Activated T-helper 1 cell treated with anti-CD3 and anti-CD28 coated beads, Interleukin-12 subunit alpha, Interleukin-12 subunit beta, Interleukin-2, Interleukin-4 antibody, amounts not matched to agents 30 ng/mL and 10 ng/mL and 1 ng/mL, durations not matched to agents 14 hours and 24 hours and 36 hours (primary cell): ENCODE measurements at regions of chr22 and their contacts with region 1.

Region 1: DNA sequence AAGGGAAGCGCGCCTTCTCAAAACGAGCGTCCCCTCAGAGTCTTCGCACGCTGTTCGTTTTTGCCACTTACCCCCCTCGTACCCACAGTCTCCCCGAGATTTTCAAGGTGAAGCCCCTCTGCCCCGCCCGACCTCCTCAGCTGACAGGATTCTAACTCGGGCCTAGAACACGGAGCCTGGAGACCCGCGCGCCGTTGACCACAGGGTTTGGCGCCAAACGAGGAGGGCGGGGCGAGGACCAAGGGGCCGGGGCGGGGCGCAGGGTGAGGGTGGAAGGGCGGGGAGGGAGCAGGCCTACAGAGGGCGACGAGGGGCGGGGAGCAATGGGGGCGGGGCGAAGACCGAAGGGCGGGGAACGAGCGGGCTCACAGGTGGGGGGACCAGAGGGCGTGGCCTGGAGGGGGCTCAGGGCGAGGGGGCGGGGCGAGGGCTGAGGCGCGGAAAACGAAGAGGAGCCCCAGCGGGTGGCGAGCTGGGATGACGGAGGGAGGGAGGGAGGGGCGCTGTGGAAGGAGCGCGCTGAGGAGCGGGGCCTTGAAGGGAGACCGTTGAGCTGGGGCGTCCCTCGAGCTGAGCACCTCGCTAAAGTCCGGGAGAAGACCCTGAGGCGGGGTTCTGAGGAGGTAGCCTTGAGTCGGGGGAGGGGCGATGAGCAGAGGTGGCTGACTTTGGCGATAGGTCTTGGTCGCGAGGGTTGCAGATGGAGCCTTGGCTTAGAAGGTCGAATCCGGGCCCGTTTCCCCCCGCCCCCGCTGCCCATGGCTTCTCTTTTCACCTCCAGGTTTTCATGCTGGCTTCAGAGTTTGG is at the start of gene DMC1:
- DNase-seq: peak; percentile 86
- H3K4me3 Mint-ChIP-seq: peak within 1 kb of the TSS; percentile 90
- H3K27ac Mint-ChIP-seq: peak within 1 kb of the TSS; percentile 92
- H3K4me1 Mint-ChIP-seq: peaks cover 16% of the 10 kb centered on the region
- H3K27me3 Mint-ChIP-seq: no peaks in the 10 kb centered on the region
- total RNA-seq, gene DMC1: 11.2 and 11.7 TPM in 2 replicates

Region 2: DNA sequence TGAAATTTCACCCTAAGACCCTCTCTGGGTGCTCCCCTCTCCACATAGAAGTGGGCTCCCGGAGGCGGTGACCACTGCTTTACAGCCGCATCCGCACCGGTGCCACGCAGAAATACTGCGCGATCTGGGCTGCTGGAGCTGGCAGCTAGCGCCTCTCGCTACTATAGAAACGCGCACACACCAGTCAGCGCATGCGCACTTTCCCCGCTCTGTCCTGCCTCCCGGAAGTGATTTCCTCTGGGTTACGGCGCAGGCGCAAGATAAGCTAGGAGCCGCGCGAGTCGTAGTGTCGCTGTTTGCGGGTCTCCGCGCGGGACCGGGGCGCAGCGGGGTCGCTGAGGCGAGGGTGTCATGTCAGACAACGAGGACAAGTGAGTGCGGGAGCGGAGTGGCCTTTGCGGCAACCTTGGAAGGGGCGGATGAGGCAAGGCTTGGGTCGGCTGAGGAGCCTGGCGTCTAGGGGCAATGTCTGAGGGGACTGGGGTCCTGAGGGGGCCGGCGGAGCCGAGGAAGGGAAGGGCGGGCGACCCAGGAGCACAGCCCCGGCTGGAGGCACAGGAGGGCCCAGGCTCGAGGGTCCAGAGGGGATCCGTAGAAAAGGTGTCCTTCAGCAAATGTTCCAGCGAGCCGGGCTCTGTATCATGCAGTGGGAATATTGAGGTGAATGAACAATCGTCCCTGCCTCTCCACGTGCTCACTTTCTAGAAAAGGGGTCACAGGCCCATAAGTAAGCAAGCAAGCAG is 616.6 kb before region 1 on chr22 and contains the starts of genes C22orf23 and POLR2F:
- intact Hi-C with region 1: loop called (anchors 1 kb)
- DNase-seq: peak; percentile 94
- H3K4me3 Mint-ChIP-seq: peak within 1 kb of the TSS; percentile 99
- H3K27ac Mint-ChIP-seq: peak within 1 kb of the TSS; percentile 92
- H3K4me1 Mint-ChIP-seq: peaks cover 26% of the 10 kb centered on the region
- H3K27me3 Mint-ChIP-seq: peaks cover 7% of the 10 kb centered on the region
- total RNA-seq, gene C22orf23: 0.61 TPM in 1 of 2 replicates, not detected in the other
- total RNA-seq, gene POLR2F: 102 and 120 TPM in 2 replicates

Region 3: GRCh38 chr22:38181453-38182247 is 388.5 kb before region 1 on chr22 and contains the start of gene PLA2G6:
- intact Hi-C with region 1: loop called (anchors 1 kb)
- DNase-seq: peak; percentile 99
- H3K4me3 Mint-ChIP-seq: peak within 1 kb of the TSS; percentile 89
- H3K27ac Mint-ChIP-seq: peak within 1 kb of the TSS; percentile 95
- H3K4me1 Mint-ChIP-seq: peaks cover 48% of the 10 kb centered on the region
- H3K27me3 Mint-ChIP-seq: peaks cover 10% of the 10 kb centered on the region
- total RNA-seq, gene PLA2G6: 34.8 and 34.9 TPM in 2 replicates

Region 4: DNA sequence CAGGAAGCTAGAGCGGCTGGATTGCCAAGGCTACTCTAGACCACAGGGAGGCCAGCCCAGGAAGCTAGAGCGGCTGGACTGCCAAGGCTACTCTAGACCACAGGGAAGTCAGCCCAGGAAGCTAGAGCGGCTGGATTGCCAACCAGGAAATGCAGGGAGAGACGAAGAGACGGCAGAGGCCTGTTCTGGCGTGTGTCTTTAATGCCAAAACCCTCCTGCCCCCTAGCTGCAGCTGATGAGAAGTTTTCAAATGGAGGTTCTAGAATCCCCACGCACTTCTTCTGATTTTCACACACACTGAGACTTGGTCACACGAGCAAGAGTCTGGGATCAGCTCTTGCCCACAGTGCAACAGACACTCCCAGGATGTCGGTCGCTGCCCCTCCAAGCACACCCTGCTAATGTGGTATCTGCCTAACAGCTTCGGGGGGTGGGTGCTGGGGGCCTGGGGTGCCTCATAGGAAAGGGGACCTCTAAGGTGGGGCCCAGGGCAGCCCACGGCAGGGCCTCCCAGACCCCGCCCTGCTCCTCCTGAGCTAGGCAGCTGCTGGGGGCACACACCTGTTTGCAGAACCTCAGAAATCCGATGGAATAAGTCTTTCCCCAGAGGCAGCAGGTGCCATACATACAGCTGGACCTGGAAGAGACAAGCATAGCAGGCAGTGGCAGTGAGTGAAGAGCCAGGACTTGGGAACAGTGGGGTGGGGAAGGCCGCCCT is 339.9 kb before region 1 on chr22:
- intact Hi-C with region 1: no loop called
- DNase-seq: no peak
- H3K4me3 Mint-ChIP-seq: no peak overlapping the region
- H3K27ac Mint-ChIP-seq: no peak overlapping the region
- H3K4me1 Mint-ChIP-seq: peaks cover 7% of the 10 kb centered on the region
- H3K27me3 Mint-ChIP-seq: no peaks in the 10 kb centered on the region

Region 5: GRCh38 chr22:38272373-38273134 is 297.6 kb before region 1 on chr22 and contains the start of gene TMEM184B:
- intact Hi-C with region 1: loop called (anchors 2 kb)
- DNase-seq: peak; percentile 82
- H3K4me3 Mint-ChIP-seq: peak within 1 kb of the TSS; percentile 87
- H3K27ac Mint-ChIP-seq: peak within 1 kb of the TSS; percentile 87
- H3K4me1 Mint-ChIP-seq: peaks cover 45% of the 10 kb centered on the region
- H3K27me3 Mint-ChIP-seq: peaks cover 11% of the 10 kb centered on the region
- total RNA-seq, gene TMEM184B: 36.6 and 39.1 TPM in 2 replicates

Region 6: DNA sequence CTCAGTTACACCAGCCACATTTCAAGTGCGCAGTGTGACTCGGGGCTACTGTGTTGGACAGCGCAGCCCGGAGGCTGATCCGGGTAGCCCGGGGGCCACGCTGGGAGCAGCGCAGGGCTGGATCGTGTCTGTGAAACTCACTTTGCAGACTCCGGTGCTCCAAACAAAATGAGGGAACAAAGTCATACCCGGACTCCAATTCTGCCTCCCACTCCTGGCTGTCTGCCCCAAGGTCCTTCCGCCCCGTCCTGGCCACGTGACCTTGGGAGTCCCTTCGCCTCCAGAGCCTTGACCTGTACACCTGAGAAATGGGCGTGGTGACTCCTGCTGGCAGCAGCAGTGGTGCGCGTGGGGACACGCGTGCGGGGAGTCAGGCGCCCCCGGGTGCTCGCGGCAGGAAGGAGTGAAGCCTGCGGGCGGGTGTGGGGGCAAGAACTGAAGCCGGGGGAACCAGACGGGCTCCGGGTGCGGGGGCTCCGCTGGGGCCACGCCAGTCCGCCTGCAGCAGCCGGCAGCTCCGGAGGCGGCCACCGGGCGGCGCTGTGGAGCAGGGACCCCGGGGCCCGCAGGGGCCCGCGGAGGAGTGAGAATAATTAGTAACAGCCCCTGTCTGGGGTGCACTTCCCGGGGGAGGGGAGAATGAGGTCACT is 157.6 kb before region 1 on chr22:
- intact Hi-C with region 1: loop called (anchors 1 kb)
- DNase-seq: peak; percentile 14
- H3K4me3 Mint-ChIP-seq: no peak overlapping the region
- H3K27ac Mint-ChIP-seq: no peak overlapping the region
- H3K4me1 Mint-ChIP-seq: no peaks in the 10 kb centered on the region
- H3K27me3 Mint-ChIP-seq: peaks cover 4% of the 10 kb centered on the region

Region 7: DNA sequence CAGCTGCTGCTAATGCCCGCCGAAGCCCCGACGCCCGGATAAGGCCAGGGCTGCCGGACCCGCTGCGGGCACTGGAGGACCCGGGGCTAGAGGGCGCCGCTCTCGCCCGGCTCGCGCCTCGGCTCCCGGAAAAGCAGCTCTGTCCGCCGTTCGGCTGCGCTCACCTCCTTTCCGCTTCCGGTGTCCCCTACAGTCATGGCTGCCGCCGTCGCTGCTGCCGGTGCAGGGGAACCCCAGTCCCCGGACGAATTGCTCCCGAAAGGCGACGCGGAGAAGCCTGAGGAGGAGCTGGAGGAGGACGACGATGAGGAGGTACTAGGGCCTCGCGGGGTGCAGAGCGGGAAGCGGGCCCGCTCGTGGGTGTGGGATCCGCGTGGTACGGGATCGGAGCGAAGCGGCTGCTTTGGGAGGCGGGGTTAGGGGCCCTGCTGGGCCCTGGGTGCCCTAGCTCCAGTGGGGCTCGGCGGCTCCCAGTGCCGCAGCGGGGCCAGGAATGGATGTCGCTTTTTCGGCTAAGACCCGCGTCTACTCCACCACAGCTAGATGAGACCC is 111.7 kb after region 1 on chr22 and contains the start of gene TOMM22:
- intact Hi-C with region 1: loop called (anchors 1 kb)
- DNase-seq: peak; percentile 83
- H3K4me3 Mint-ChIP-seq: peak within 1 kb of the TSS; percentile 98
- H3K27ac Mint-ChIP-seq: peak within 1 kb of the TSS; percentile 96
- H3K4me1 Mint-ChIP-seq: peaks cover 21% of the 10 kb centered on the region
- H3K27me3 Mint-ChIP-seq: no peaks in the 10 kb centered on the region
- total RNA-seq, gene TOMM22: 153 and 156 TPM in 2 replicates